HCT116 (cell line): ENCODE measurements at regions of chr3 and their contacts with region 1.

Region 1: DNA sequence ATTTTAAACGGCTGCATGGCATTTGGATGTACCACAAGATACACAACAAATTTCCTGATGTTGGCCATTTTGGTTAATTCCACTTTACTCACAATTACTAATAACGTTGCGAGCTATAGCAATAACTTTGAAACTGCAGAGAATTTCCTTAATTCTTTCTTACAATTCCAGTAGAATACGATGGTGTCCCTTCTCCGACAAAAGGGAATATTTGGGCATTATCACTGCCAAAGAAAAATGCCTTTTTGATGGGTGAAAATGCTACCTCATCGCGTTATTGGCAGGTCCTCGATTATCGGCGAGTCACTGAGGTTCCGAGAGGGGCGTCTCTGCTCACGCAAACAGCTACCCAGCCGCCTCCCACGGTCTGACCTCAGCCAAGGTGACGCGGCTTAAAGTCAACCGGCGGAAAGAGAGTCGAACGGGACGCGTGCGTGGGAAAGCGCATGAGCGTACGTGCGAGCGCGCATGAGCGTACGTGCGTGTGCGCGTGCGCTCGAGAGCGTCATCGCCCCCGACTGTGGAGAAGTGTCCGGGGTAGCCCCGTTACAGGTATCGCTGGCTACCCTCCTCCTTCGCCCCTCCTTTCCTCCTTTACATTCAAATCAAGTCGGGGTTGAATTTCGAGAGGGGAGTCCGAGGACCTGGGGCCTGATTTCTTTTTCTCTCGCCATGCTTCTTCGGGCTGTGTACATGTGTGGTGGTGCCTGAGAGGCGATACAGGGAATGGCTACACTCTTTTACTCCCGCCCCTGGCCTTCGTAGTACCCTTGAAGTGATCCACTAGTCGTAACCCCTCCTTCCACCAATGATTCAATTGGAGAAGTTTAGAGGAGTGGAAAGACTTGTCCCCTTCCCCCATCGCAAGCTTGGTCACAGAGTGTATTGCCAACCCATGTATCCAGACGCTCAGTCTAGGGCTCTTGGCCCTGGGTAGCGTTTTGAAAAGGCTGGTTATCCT is at the start of gene OXSM:
- DNase-seq: peak; percentile 87
- ATAC-seq: peak; percentile 96
- H3K4me3 ChIP-seq: peak within 1 kb of the TSS; percentile 71 to 83
- H3K27ac ChIP-seq: peak within 1 kb of the TSS; percentile 64
- H3K4me1 ChIP-seq: peaks cover 0 to 16% of the 10 kb centered on the region in 2 experiments; a peak in 2 of 4 replicates
- H3K27me3 ChIP-seq: no peaks in the 10 kb centered on the region
- CTCF ChIP-seq: no peak
- POLR2A ChIP-seq: no peak
- RAD21 ChIP-seq: no peak
- total RNA-seq, gene OXSM: 17.7 TPM

Region 2: GRCh38 chr3:25664810-25665314 is 125.0 kb before region 1 on chr3 and contains the start of gene TOP2B:
- CTCF ChIA-PET with region 1: no interaction called
- POLR2A ChIA-PET with region 1: no interaction called
- RAD21 ChIA-PET with region 1: no interaction called
- intact Hi-C with region 1: loop called (anchors 2 kb)
- DNase-seq: peak; percentile 86
- ATAC-seq: peak; percentile 94
- H3K4me3 ChIP-seq: peak within 1 kb of the TSS; percentile 57 to 75
- H3K27ac ChIP-seq: peak within 1 kb of the TSS; percentile 92
- H3K4me1 ChIP-seq: peaks cover 8 to 17% of the 10 kb centered on the region in 2 experiments; a peak in 3 of 4 replicates
- H3K27me3 ChIP-seq: no peaks in the 10 kb centered on the region
- CTCF ChIP-seq: no peak
- POLR2A ChIP-seq: peak; percentile 36
- RAD21 ChIP-seq: no peak
- total RNA-seq, gene TOP2B: 101 TPM

Region 3: GRCh38 chr3:25713335-25713985 is 76.4 kb before region 1 on chr3:
- CTCF ChIA-PET with region 1: no interaction called
- POLR2A ChIA-PET with region 1: no interaction called
- RAD21 ChIA-PET with region 1: no interaction called
- intact Hi-C with region 1: no loop called
- DNase-seq: no peak
- ATAC-seq: no peak
- H3K4me3 ChIP-seq: no peak overlapping the region
- H3K27ac ChIP-seq: no peak overlapping the region
- H3K4me1 ChIP-seq: no peaks in the 10 kb centered on the region
- H3K27me3 ChIP-seq: peaks cover 3% of the 10 kb centered on the region
- CTCF ChIP-seq: no peak
- POLR2A ChIP-seq: no peak
- RAD21 ChIP-seq: no peak

Region 4: GRCh38 chr3:26422415-26422814 is 632.5 kb after region 1 on chr3:
- CTCF ChIA-PET with region 1: no interaction called
- POLR2A ChIA-PET with region 1: no interaction called
- RAD21 ChIA-PET with region 1: no interaction called
- intact Hi-C with region 1: no loop called
- DNase-seq: no peak
- ATAC-seq: no peak
- H3K4me3 ChIP-seq: no peak overlapping the region
- H3K27ac ChIP-seq: no peak overlapping the region
- H3K4me1 ChIP-seq: no peaks in the 10 kb centered on the region
- H3K27me3 ChIP-seq: no peaks in the 10 kb centered on the region
- CTCF ChIP-seq: no peak
- POLR2A ChIP-seq: no peak
- RAD21 ChIP-seq: no peak